GM12878 (cell line): ENCODE measurements at regions of chr5 and their contacts with region 1.

Region 1: GRCh38 chr5:158174918-158175851 is 316.2 kb upstream of the CLINT1 start:
- DNase-seq: peak; percentile 27
- ATAC-seq: peak; percentile 97
- H3K4me3 ChIP-seq: no peak overlapping the region
- H3K27ac ChIP-seq: no peak overlapping the region
- H3K4me1 ChIP-seq: no peaks in the 10 kb centered on the region
- H3K27me3 ChIP-seq: peaks cover 0 to 1% of the 10 kb centered on the region in 2 experiments; a peak in 1 of 4 replicates
- CTCF ChIP-seq: peak; percentile 81 to 87 (median 84)
- EP300 ChIP-seq: no peak
- POLR2A ChIP-seq: no peak
- RAD21 ChIP-seq: peak; percentile 99

Region 2: GRCh38 chr5:157917899-157918809 is 257.0 kb before region 1 on chr5:
- CTCF ChIA-PET with region 1: no interaction called
- POLR2A ChIA-PET with region 1: no interaction called
- RAD21 ChIA-PET with region 1: no interaction called
- SMC1A ChIA-PET with region 1: no interaction called
- in situ Hi-C with region 1: no loop called
- intact Hi-C with region 1: no loop called
- DNase-seq: no peak
- ATAC-seq: peak; percentile 92
- H3K4me3 ChIP-seq: no peak overlapping the region
- H3K27ac ChIP-seq: no peak overlapping the region
- H3K4me1 ChIP-seq: no peaks in the 10 kb centered on the region; the same call in 1 of the 2 replicates
- H3K27me3 ChIP-seq: no peaks in the 10 kb centered on the region
- CTCF ChIP-seq: peak; percentile 64 to 71 (median 65)
- EP300 ChIP-seq: no peak
- POLR2A ChIP-seq: no peak
- RAD21 ChIP-seq: peak; percentile 81

Region 3: GRCh38 chr5:157989296-157989695 is 185.9 kb before region 1 on chr5:
- CTCF ChIA-PET with region 1: no interaction called
- POLR2A ChIA-PET with region 1: no interaction called
- RAD21 ChIA-PET with region 1: no interaction called
- SMC1A ChIA-PET with region 1: no interaction called
- in situ Hi-C with region 1: no loop called
- intact Hi-C with region 1: no loop called
- DNase-seq: no peak
- ATAC-seq: no peak
- H3K4me3 ChIP-seq: no peak overlapping the region
- H3K27ac ChIP-seq: no peak overlapping the region
- H3K4me1 ChIP-seq: no peaks in the 10 kb centered on the region
- H3K27me3 ChIP-seq: no peaks in the 10 kb centered on the region
- CTCF ChIP-seq: no peak
- EP300 ChIP-seq: no peak
- POLR2A ChIP-seq: no peak
- RAD21 ChIP-seq: no peak

Region 4: DNA sequence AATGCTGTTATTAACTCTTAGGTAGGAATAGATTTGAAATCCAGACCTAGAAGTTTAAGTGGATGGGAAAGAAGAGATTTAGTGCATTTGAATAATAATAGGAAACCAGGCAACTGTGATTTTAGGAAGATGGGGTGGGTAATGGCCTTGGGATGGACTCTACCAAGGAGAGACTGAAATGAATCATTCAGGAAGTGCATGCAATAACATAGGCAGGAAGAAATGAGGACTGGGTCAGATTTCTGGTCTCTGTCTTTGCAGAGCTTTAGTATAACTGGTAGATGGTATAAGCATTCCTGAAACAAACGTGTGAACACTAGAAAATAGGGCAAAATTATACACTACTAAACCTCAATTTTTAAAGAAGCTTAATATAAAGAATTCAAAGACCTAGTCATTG is 41.8 kb before region 1 on chr5:
- CTCF ChIA-PET with region 1: no interaction called
- POLR2A ChIA-PET with region 1: no interaction called
- RAD21 ChIA-PET with region 1: no interaction called
- SMC1A ChIA-PET with region 1: no interaction called
- in situ Hi-C with region 1: no loop called
- intact Hi-C with region 1: no loop called
- DNase-seq: no peak
- ATAC-seq: no peak
- H3K4me3 ChIP-seq: no peak overlapping the region
- H3K27ac ChIP-seq: no peak overlapping the region
- H3K4me1 ChIP-seq: no peaks in the 10 kb centered on the region
- H3K27me3 ChIP-seq: no peaks in the 10 kb centered on the region; a peak in 1 of 4 replicates
- CTCF ChIP-seq: no peak
- EP300 ChIP-seq: no peak
- POLR2A ChIP-seq: no peak
- RAD21 ChIP-seq: no peak

Region 5: GRCh38 chr5:158676642-158677469 is 501.7 kb after region 1 on chr5:
- CTCF ChIA-PET with region 1: interaction called, 6 read pairs
- POLR2A ChIA-PET with region 1: no interaction called
- RAD21 ChIA-PET with region 1: interaction called, 14 read pairs
- SMC1A ChIA-PET with region 1: interaction called, 14 read pairs
- in situ Hi-C with region 1: loop called (anchors 5 kb)
- intact Hi-C with region 1: loop called (anchors 5 kb)
- DNase-seq: no peak
- ATAC-seq: peak; percentile 83
- H3K4me3 ChIP-seq: no peak overlapping the region
- H3K27ac ChIP-seq: no peak overlapping the region
- H3K4me1 ChIP-seq: peaks cover 3% of the 10 kb centered on the region; the same call in 1 of the 2 replicates
- H3K27me3 ChIP-seq: no peaks in the 10 kb centered on the region; a peak in 1 of 4 replicates
- CTCF ChIP-seq: peak; percentile 19 to 37 (median 31); a peak in 4 of 6 replicates
- EP300 ChIP-seq: no peak
- POLR2A ChIP-seq: no peak
- RAD21 ChIP-seq: 0 out of 2 replicates have a peak, but pooled peaks have one; percentile 25

Region 6: DNA sequence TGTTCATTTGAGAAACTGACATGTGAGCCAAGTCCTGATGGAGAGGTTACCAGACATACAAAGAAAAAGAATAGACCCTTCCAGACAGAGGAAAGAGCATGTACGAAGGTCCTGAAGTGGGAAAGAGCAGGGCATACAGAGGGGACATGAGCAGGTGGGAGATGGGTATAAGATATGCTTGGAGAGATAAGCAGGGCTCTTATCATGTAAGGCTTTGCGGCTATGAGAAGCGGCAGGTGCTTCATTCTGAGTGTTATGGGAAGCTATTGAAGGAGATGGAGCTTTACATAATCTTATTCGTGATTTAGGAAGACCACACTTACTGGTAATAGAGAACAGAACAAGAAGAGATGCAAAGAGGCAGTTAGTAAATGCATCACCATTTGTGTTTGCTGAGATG is 507.4 kb after region 1 on chr5:
- CTCF ChIA-PET with region 1: interaction called, 7 read pairs
- POLR2A ChIA-PET with region 1: no interaction called
- RAD21 ChIA-PET with region 1: interaction called, 3 read pairs
- SMC1A ChIA-PET with region 1: interaction called, 14 read pairs
- in situ Hi-C with region 1: loop called (anchors 5 kb)
- intact Hi-C with region 1: loop called (anchors 5 kb)
- DNase-seq: no peak
- ATAC-seq: no peak
- H3K4me3 ChIP-seq: no peak overlapping the region
- H3K27ac ChIP-seq: no peak overlapping the region
- H3K4me1 ChIP-seq: peaks cover 3% of the 10 kb centered on the region; the same call in 1 of the 2 replicates
- H3K27me3 ChIP-seq: no peaks in the 10 kb centered on the region; a peak in 1 of 4 replicates
- CTCF ChIP-seq: no peak
- EP300 ChIP-seq: no peak
- POLR2A ChIP-seq: no peak
- RAD21 ChIP-seq: no peak

Region 7: GRCh38 chr5:159430361-159431012 is 1255.3 kb after region 1 on chr5:
- CTCF ChIA-PET with region 1: no interaction called
- POLR2A ChIA-PET with region 1: no interaction called
- RAD21 ChIA-PET with region 1: no interaction called
- SMC1A ChIA-PET with region 1: no interaction called
- in situ Hi-C with region 1: no loop called
- intact Hi-C with region 1: no loop called
- DNase-seq: no peak
- ATAC-seq: no peak
- H3K4me3 ChIP-seq: no peak overlapping the region
- H3K27ac ChIP-seq: no peak overlapping the region
- H3K4me1 ChIP-seq: peaks cover 40% of the 10 kb centered on the region
- H3K27me3 ChIP-seq: no peaks in the 10 kb centered on the region; a peak in 1 of 4 replicates
- CTCF ChIP-seq: no peak
- EP300 ChIP-seq: 0 out of 4 replicates have a peak, but pooled peaks of 1 of the 2 experiments have one; percentile 10
- POLR2A ChIP-seq: no peak
- RAD21 ChIP-seq: no peak